ENCODE measurements at regions of chr5 and their contacts with region 1.

Region 1: GRCh38 chr5:58025809-58026208 is 434.1 kb downstream of the PLK2 start:
- DNase-seq: no peak
- H3K4me3 ChIP-seq: no peak overlapping the region
- H3K27ac ChIP-seq: no peak overlapping the region
- H3K4me1 ChIP-seq: no peaks in the 10 kb centered on the region
- H3K27me3 ChIP-seq: no peaks in the 10 kb centered on the region
- CTCF ChIP-seq: no peak
- POLR2A ChIP-seq: no peak

Region 2: DNA sequence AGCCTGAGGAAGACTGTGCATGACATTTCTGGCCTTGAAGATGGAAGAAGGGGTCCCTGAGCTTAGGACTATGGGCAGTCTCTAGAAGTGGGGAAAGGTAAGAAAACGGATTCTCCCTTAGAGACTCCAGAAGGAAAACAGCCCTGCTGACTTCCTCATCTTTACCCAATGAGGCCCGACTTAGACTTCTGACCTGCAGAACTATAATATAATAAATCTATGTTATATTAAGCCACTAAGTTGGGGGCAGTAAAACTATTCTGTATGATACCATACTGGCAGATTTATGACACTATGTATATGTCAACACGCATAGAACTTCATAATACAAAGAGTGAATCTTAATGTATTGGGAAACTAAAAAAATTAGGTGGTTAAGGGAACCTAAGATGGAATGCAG is 12.1 kb after region 1 on chr5:
- CTCF ChIA-PET with region 1: interaction called, 4 read pairs
- POLR2A ChIA-PET with region 1: no interaction called
- dilution Hi-C with region 1: no loop called
- intact Hi-C with region 1: loop called (anchors 1 kb)
- DNase-seq: no peak
- H3K4me3 ChIP-seq: no peak overlapping the region
- H3K27ac ChIP-seq: no peak overlapping the region
- H3K4me1 ChIP-seq: no peaks in the 10 kb centered on the region
- H3K27me3 ChIP-seq: no peaks in the 10 kb centered on the region
- CTCF ChIP-seq: no peak
- POLR2A ChIP-seq: no peak